Calu3 (cell line): ENCODE measurements at regions of chr2 and their contacts with region 1.

Region 1: DNA sequence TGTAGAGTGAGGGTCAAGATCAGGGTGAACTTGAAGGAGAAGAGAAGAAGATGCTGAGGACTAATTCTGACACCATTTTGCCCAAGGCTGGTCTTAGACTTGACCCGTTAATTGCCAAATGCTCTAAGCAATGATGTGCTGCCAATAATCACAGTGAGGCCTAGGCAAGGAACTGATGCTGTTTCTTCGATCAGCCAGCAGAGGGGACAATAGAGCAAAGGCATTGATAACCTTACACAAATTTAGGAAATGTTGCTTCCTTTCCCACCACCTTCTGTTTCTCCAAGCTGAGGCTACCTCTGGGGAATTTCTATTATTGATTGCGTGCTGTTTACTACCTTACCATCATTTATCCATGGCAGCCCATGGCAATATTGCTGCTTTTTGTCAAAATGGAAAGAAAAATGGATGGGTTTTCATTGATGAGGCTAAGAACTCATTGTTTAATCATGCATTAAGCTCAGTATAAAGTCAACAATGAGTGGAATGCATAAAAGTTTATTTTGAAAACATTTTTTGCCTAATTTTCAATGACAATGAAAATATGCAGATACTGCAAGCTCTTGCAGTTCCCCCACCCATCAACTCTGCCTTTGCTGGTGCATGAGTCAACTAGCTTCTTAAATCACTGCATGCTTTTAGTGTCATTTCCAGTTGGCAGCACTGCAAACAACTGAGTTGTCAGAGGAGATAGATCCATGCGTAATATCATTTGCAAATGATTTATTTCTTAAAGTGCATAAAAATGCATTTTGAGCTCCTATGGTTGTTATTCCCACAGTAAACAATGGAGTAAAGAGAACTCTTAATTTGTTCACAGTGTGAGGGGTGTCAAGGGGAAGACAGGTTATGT is 116.4 kb upstream of the NYAP2 start:
- DNase-seq: peak; percentile 34
- H3K4me3 Mint-ChIP-seq: no peak overlapping the region
- H3K27ac Mint-ChIP-seq: no peak overlapping the region
- H3K4me1 Mint-ChIP-seq: no peaks in the 10 kb centered on the region
- H3K27me3 Mint-ChIP-seq: peaks cover 23% of the 10 kb centered on the region
- CTCF ChIP-seq: peak; percentile 69

Region 2: GRCh38 chr2:223735659-223736244 is 1547.3 kb before region 1 on chr2:
- CTCF ChIA-PET with region 1: no interaction called
- intact Hi-C with region 1: no loop called
- DNase-seq: no peak
- H3K4me3 Mint-ChIP-seq: no peak overlapping the region
- H3K27ac Mint-ChIP-seq: peak overlapping the region; percentile 91
- H3K4me1 Mint-ChIP-seq: peaks cover 59% of the 10 kb centered on the region
- H3K27me3 Mint-ChIP-seq: no peaks in the 10 kb centered on the region
- CTCF ChIP-seq: no peak

Region 3: GRCh38 chr2:224666951-224667553 is 616.0 kb before region 1 on chr2:
- CTCF ChIA-PET with region 1: no interaction called
- intact Hi-C with region 1: no loop called
- DNase-seq: no peak
- H3K4me3 Mint-ChIP-seq: no peak overlapping the region
- H3K27ac Mint-ChIP-seq: no peak overlapping the region
- H3K4me1 Mint-ChIP-seq: no peaks in the 10 kb centered on the region
- H3K27me3 Mint-ChIP-seq: no peaks in the 10 kb centered on the region
- CTCF ChIP-seq: no peak

Region 4: GRCh38 chr2:225310745-225311144 is 27.7 kb after region 1 on chr2:
- CTCF ChIA-PET with region 1: no interaction called
- intact Hi-C with region 1: no loop called
- DNase-seq: no peak
- H3K4me3 Mint-ChIP-seq: no peak overlapping the region
- H3K27ac Mint-ChIP-seq: no peak overlapping the region
- H3K4me1 Mint-ChIP-seq: no peaks in the 10 kb centered on the region
- H3K27me3 Mint-ChIP-seq: no peaks in the 10 kb centered on the region
- CTCF ChIP-seq: no peak

Region 5: GRCh38 chr2:225354281-225354774 is 71.2 kb after region 1 on chr2:
- CTCF ChIA-PET with region 1: no interaction called
- intact Hi-C with region 1: no loop called
- DNase-seq: no peak
- H3K4me3 Mint-ChIP-seq: no peak overlapping the region
- H3K27ac Mint-ChIP-seq: no peak overlapping the region
- H3K4me1 Mint-ChIP-seq: peaks cover 7% of the 10 kb centered on the region
- H3K27me3 Mint-ChIP-seq: peaks cover 11% of the 10 kb centered on the region
- CTCF ChIP-seq: no peak

Region 6: GRCh38 chr2:225471482-225471881 is 188.4 kb after region 1 on chr2:
- CTCF ChIA-PET with region 1: no interaction called
- intact Hi-C with region 1: loop called (anchors 10 kb)
- DNase-seq: no peak
- H3K4me3 Mint-ChIP-seq: no peak overlapping the region
- H3K27ac Mint-ChIP-seq: peak overlapping the region; percentile 50
- H3K4me1 Mint-ChIP-seq: peaks cover 72% of the 10 kb centered on the region
- H3K27me3 Mint-ChIP-seq: no peaks in the 10 kb centered on the region
- CTCF ChIP-seq: no peak

Region 7: GRCh38 chr2:225556461-225556860 is 273.4 kb after region 1 on chr2:
- CTCF ChIA-PET with region 1: interaction called, 10 read pairs
- intact Hi-C with region 1: loop called (anchors 1 kb)
- DNase-seq: peak; percentile 6
- H3K4me3 Mint-ChIP-seq: no peak overlapping the region
- H3K27ac Mint-ChIP-seq: no peak overlapping the region
- H3K4me1 Mint-ChIP-seq: no peaks in the 10 kb centered on the region
- H3K27me3 Mint-ChIP-seq: peaks cover 11% of the 10 kb centered on the region
- CTCF ChIP-seq: no peak